ENCODE measurements at regions of chr3 and their contacts with region 1.

Region 1: GRCh38 chr3:158532099-158532734 is 38.8 kb upstream of the MLF1 start:
- DNase-seq: peak; percentile 70
- ATAC-seq: peak; percentile 54
- H3K4me3 ChIP-seq: no peak overlapping the region
- H3K27ac ChIP-seq: no peak overlapping the region
- H3K4me1 ChIP-seq: no peaks in the 10 kb centered on the region
- H3K27me3 ChIP-seq: no peaks in the 10 kb centered on the region
- CTCF ChIP-seq: peak; percentile 70
- POLR2A ChIP-seq: no peak
- RAD21 ChIP-seq: peak; percentile 80

Region 2: GRCh38 chr3:157606011-157606851 is 926.0 kb before region 1 on chr3:
- CTCF ChIA-PET with region 1: interaction called, 3 read pairs
- POLR2A ChIA-PET with region 1: no interaction called
- dilution Hi-C with region 1: no loop called
- in situ Hi-C with region 1: loop called (anchors 10 kb)
- intact Hi-C with region 1: loop called (anchors 1 kb)
- DNase-seq: peak; percentile 71
- ATAC-seq: peak; percentile 95
- H3K4me3 ChIP-seq: no peak overlapping the region
- H3K27ac ChIP-seq: no peak overlapping the region
- H3K4me1 ChIP-seq: no peaks in the 10 kb centered on the region
- H3K27me3 ChIP-seq: no peaks in the 10 kb centered on the region; the same call in 1 of the 2 replicates
- CTCF ChIP-seq: peak; percentile 71
- POLR2A ChIP-seq: no peak
- RAD21 ChIP-seq: peak; percentile 54

Region 3: GRCh38 chr3:157865352-157866000 is 666.7 kb before region 1 on chr3:
- CTCF ChIA-PET with region 1: no interaction called
- POLR2A ChIA-PET with region 1: no interaction called
- dilution Hi-C with region 1: no loop called
- in situ Hi-C with region 1: no loop called
- intact Hi-C with region 1: loop called (anchors 5 kb)
- DNase-seq: no peak
- ATAC-seq: no peak
- H3K4me3 ChIP-seq: no peak overlapping the region
- H3K27ac ChIP-seq: no peak overlapping the region
- H3K4me1 ChIP-seq: no peaks in the 10 kb centered on the region
- H3K27me3 ChIP-seq: no peaks in the 10 kb centered on the region
- CTCF ChIP-seq: peak; percentile 43
- POLR2A ChIP-seq: no peak
- RAD21 ChIP-seq: peak; percentile 52

Region 4: GRCh38 chr3:158097593-158098308 is 434.5 kb before region 1 on chr3:
- CTCF ChIA-PET with region 1: no interaction called
- POLR2A ChIA-PET with region 1: no interaction called
- dilution Hi-C with region 1: no loop called
- in situ Hi-C with region 1: no loop called
- intact Hi-C with region 1: loop called (anchors 5 kb)
- DNase-seq: peak; percentile 57
- ATAC-seq: peak; percentile 71
- H3K4me3 ChIP-seq: peak overlapping the region; percentile 56
- H3K27ac ChIP-seq: no peak overlapping the region
- H3K4me1 ChIP-seq: peaks cover 2% of the 10 kb centered on the region; the same call in 1 of the 2 replicates
- H3K27me3 ChIP-seq: peaks cover 64% of the 10 kb centered on the region
- CTCF ChIP-seq: no peak
- POLR2A ChIP-seq: no peak
- RAD21 ChIP-seq: no peak

Region 5: GRCh38 chr3:158434412-158435038 is 97.7 kb before region 1 on chr3:
- CTCF ChIA-PET with region 1: interaction called, 6 read pairs
- POLR2A ChIA-PET with region 1: no interaction called
- dilution Hi-C with region 1: no loop called
- in situ Hi-C with region 1: no loop called
- intact Hi-C with region 1: loop called (anchors 5 kb)
- DNase-seq: peak; percentile 60
- ATAC-seq: peak; percentile 79
- H3K4me3 ChIP-seq: no peak overlapping the region
- H3K27ac ChIP-seq: no peak overlapping the region
- H3K4me1 ChIP-seq: no peaks in the 10 kb centered on the region
- H3K27me3 ChIP-seq: no peaks in the 10 kb centered on the region
- CTCF ChIP-seq: peak; percentile 78
- POLR2A ChIP-seq: no peak
- RAD21 ChIP-seq: peak; percentile 74

Region 6: GRCh38 chr3:158494673-158495072 is 37.5 kb before region 1 on chr3:
- CTCF ChIA-PET with region 1: no interaction called
- POLR2A ChIA-PET with region 1: no interaction called
- dilution Hi-C with region 1: no loop called
- in situ Hi-C with region 1: no loop called
- intact Hi-C with region 1: no loop called
- DNase-seq: no peak
- ATAC-seq: no peak
- H3K4me3 ChIP-seq: no peak overlapping the region
- H3K27ac ChIP-seq: no peak overlapping the region
- H3K4me1 ChIP-seq: no peaks in the 10 kb centered on the region
- H3K27me3 ChIP-seq: no peaks in the 10 kb centered on the region
- CTCF ChIP-seq: no peak
- POLR2A ChIP-seq: no peak
- RAD21 ChIP-seq: no peak

Measured in IMR-90 (cell line).